Activated CD8-positive, alpha-beta memory T cell treated with anti-CD3 and anti-CD28 coated beads, Interleukin-2, amount 10 ng/mL, durations not matched to agents 7 days and 5 days (primary cell): ENCODE measurements at regions of chr10 and their contacts with region 1.

Region 1: DNA sequence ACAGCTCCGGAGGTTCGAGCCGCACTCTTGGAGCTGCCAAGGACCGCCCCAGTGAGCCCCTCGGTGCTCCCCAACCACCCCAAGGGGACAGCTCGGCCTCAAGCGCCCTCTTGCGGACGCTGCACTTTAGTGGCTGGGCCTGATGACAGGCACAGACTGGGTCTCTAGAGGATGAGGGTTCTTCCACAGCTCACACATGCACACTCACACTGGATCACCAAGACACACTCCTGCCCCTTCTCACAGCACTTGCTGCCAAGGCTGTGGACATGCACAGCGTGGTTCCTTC is 2.1 kb downstream of the RET start:
- DNase-seq: no peak
- ATAC-seq: no peak
- H3K4me3 Mint-ChIP-seq: no peak overlapping the region
- H3K27ac Mint-ChIP-seq: no peak overlapping the region
- H3K4me1 Mint-ChIP-seq: peaks cover 13% of the 10 kb centered on the region
- H3K27me3 Mint-ChIP-seq: peaks cover 43% of the 10 kb centered on the region

Region 2: GRCh38 chr10:42952349-42952748 is 126.6 kb before region 1 on chr10:
- CTCF ChIA-PET with region 1: no interaction called
- DNase-seq: peak; percentile 39
- ATAC-seq: no peak
- H3K4me3 Mint-ChIP-seq: no peak overlapping the region
- H3K27ac Mint-ChIP-seq: no peak overlapping the region
- H3K4me1 Mint-ChIP-seq: no peaks in the 10 kb centered on the region
- H3K27me3 Mint-ChIP-seq: peaks cover 10% of the 10 kb centered on the region

Region 3: DNA sequence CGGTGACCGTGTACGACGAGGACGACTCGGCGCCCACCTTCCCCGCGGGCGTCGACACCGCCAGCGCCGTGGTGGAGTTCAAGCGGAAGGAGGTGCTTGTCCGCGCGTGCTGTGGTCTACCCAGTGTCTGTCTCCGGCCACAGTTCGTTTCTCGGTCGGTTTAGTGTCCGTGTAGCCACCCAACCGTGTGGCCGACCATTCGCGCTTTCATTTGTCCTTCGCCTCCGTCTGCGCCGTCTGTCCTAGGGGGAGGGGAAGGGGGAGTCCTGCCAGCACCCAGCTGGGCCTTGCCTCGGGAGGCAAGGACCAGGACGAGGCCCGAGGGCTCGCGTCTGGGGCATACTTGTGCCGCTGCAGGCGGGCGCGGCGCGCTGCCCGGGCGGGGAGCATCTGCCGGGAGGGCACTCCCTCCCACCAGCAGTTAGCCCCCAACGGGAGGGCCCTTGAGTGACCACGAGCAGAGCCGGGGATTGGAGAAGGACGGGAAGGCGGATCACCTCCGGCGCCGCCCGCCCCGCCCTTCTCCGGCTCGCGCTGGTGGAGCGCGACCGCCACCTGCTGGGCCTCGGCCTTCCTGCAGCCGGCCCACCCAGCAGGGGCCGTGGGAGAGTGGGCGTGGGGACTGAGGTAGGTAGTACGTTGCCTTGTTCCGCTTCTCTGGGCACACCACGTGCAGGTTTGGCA is 26.3 kb after region 1 on chr10:
- CTCF ChIA-PET with region 1: interaction called, 11 read pairs
- DNase-seq: peak; percentile 80
- ATAC-seq: peak; percentile 93
- H3K4me3 Mint-ChIP-seq: peak overlapping the region; percentile 70
- H3K27ac Mint-ChIP-seq: peak overlapping the region; percentile 52
- H3K4me1 Mint-ChIP-seq: peaks cover 37% of the 10 kb centered on the region
- H3K27me3 Mint-ChIP-seq: peaks cover 25% of the 10 kb centered on the region